AG04450 (cell line): ENCODE measurements at regions of chr1 and their contacts with region 1.

Region 1: GRCh38 chr1:245156081-245156735 is 1.4 kb downstream of the KIF26B start:
- DNase-seq: no peak
- H3K4me3 ChIP-seq: peak overlapping the region; percentile 80
- H3K27ac ChIP-seq: no peak overlapping the region
- H3K27me3 ChIP-seq: peaks cover 3% of the 10 kb centered on the region
- CTCF ChIP-seq: peak; percentile 68

Region 2: DNA sequence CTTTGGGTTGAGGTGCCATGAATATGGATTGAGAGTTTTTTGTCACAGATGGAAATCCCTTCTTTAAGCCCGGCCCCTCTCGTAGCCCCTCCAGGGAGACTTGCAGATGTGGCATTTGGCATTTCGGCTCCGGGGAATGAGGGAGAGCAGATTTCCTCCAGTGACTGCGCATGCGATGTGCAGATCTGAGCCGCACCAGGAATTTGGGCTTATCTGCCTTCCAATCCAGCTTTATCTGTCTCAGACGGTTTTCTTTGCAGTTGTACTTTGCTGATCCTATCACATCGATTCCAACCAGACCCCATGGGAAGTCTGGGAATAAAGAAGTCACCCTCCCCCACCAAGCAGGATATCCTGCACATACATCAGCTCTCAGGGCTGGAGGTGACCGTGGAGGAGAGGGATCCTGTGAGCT is 10.3 kb after region 1 on chr1:
- CTCF ChIA-PET with region 1: interaction called, 24 read pairs
- POLR2A ChIA-PET with region 1: no interaction called
- DNase-seq: no peak
- H3K4me3 ChIP-seq: peak overlapping the region; percentile 49
- H3K27ac ChIP-seq: no peak overlapping the region
- H3K27me3 ChIP-seq: no peaks in the 10 kb centered on the region
- CTCF ChIP-seq: no peak

Region 3: DNA sequence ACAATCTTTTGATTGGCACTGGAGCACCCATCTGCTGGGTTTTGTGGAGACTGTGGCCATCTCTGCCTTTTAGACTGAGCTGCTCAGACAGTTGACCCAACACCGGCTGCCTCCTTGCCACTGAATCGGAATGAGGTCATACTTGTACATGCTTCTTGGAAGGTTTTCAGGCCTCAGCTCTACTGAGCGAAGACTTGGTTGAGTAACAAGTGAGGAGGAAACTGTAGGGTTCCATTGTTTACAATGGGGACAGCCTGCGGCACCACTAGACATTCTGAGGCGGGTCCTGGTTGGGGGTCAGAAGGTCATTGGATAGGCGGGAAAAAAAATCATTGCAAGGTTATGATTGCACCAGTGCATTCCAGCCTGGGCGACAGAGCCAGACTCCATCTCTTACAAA is 318.9 kb after region 1 on chr1:
- CTCF ChIA-PET with region 1: interaction called, 12 read pairs
- POLR2A ChIA-PET with region 1: no interaction called
- DNase-seq: peak; percentile 6
- H3K4me3 ChIP-seq: no peak overlapping the region
- H3K27ac ChIP-seq: no peak overlapping the region
- H3K27me3 ChIP-seq: no peaks in the 10 kb centered on the region
- CTCF ChIP-seq: no peak

Region 4: DNA sequence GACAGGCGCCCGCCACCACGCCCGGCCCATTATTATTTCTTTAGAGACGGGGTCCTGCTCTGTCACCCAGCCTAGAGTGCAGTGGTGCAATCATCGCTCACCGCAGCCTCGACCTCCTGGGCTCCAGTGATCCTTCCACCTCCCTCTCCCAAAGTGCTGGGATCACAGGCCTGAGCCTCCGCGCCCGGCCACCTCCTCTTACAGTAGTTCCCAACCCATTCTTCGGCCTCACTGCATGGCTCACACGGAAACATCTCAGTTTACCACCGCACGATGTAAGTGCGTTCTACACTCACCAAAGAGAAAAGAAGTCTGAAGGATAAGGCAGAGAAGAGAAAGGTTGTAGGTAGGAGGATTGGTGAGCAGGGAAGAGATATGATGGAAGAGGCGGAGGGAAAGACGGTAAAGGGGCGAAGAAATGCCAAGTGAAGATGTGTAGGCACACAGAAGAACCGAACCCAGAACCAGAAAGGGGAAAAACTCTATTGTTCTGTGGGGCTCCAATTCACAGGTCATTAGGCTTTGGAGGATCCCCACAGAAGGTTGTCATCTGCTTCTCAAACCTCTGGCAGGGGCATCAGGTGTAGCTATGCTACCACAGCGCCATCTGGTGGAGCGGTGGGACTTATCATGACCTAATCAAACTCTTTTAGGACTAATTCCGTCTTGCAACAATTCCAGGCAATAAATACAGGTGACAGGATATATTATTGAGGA is 846.7 kb after region 1 on chr1:
- CTCF ChIA-PET with region 1: interaction called, 13 read pairs
- POLR2A ChIA-PET with region 1: interaction called, 7 read pairs
- DNase-seq: peak; percentile 74
- H3K4me3 ChIP-seq: no peak overlapping the region
- H3K27ac ChIP-seq: no peak overlapping the region
- H3K27me3 ChIP-seq: no peaks in the 10 kb centered on the region
- CTCF ChIP-seq: peak; percentile 90

Region 5: DNA sequence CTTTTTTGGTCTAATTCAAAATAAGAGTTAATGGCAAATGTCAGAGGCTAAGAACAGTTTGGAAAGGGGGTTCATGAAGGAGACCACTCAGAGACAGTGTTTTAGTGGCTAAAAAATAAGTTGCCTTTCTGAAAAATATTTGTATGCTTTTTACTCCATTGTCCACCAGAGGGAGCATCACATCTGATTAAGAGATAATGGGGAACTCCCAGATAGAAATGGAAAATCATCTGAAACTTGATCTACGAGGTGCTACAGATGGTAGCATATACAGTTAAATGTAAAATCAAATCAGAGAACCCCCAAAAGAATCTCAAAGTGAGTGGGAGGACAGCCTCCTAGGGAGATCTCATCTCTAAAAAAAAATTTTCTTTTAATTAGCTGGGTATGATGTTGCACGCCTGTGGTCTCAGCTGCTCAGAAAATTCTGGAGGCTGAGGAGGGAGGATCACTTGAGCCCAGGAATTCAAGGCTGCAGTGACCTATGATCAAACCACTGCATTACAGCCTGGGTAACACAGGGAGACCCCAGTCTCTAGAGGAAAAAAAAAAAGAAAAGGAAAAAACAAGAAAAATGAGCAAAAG is 1341.2 kb after region 1 on chr1:
- CTCF ChIA-PET with region 1: interaction called, 29 read pairs
- POLR2A ChIA-PET with region 1: no interaction called
- DNase-seq: peak; percentile 39
- H3K4me3 ChIP-seq: no peak overlapping the region
- H3K27ac ChIP-seq: no peak overlapping the region
- H3K27me3 ChIP-seq: no peaks in the 10 kb centered on the region
- CTCF ChIP-seq: peak; percentile 73